A549 (cell line): ENCODE measurements at regions of chr2 and their contacts with region 1.

Region 1: GRCh38 chr2:9799665-9800632 is 43.3 kb upstream of the TAF1B start:
- DNase-seq: peak; percentile 85 to 93
- ATAC-seq: peak; percentile 75 to 92
- H3K4me3 ChIP-seq: no peak overlapping the region
- H3K27ac ChIP-seq: peak overlapping the region; percentile 34 to 87; a peak in 5 of 6 replicates
- H3K4me1 ChIP-seq: peaks cover 30% of the 10 kb centered on the region
- CTCF ChIP-seq: peak; percentile 98
- EP300 ChIP-seq: no peak
- POLR2A ChIP-seq: no peak
- RAD21 ChIP-seq: peak; percentile 92 to 97

Region 2: GRCh38 chr2:9287400-9288043 is 512.4 kb before region 1 on chr2:
- CTCF ChIA-PET with region 1: no interaction called
- POLR2A ChIA-PET with region 1: no interaction called
- DNase-seq: peak; percentile 94 to 99
- ATAC-seq: peak; percentile 94 to 95
- H3K4me3 ChIP-seq: no peak overlapping the region; the same call in 1 of the 3 replicates
- H3K27ac ChIP-seq: peak overlapping the region; percentile 86 to 87
- H3K4me1 ChIP-seq: peaks cover 58% of the 10 kb centered on the region
- CTCF ChIP-seq: peak; percentile 21; the same call in 1 of the 3 replicates
- EP300 ChIP-seq: peak; percentile 52 to 61; a peak in 2 of 5 replicates
- POLR2A ChIP-seq: no peak
- RAD21 ChIP-seq: peak in 1 of 2 experiments; percentile 41; a peak in 4 of 5 replicates

Region 3: GRCh38 chr2:9753276-9753600 is 46.7 kb before region 1 on chr2:
- CTCF ChIA-PET with region 1: interaction called, 11 read pairs
- POLR2A ChIA-PET with region 1: no interaction called
- DNase-seq: peak; percentile 88 to 92
- ATAC-seq: peak; percentile 81 to 91
- H3K4me3 ChIP-seq: peak overlapping the region; percentile 35
- H3K27ac ChIP-seq: peak overlapping the region; percentile 87 to 93
- H3K4me1 ChIP-seq: peaks cover 48% of the 10 kb centered on the region
- CTCF ChIP-seq: no peak
- EP300 ChIP-seq: no peak
- POLR2A ChIP-seq: peak; percentile 30; the same call in 1 of the 2 replicates
- RAD21 ChIP-seq: no peak; a peak in 1 of 5 replicates

Region 4: GRCh38 chr2:9789371-9789968 is 10.5 kb before region 1 on chr2:
- CTCF ChIA-PET with region 1: interaction called, 73 read pairs
- POLR2A ChIA-PET with region 1: no interaction called
- DNase-seq: no peak
- ATAC-seq: no peak
- H3K4me3 ChIP-seq: no peak overlapping the region
- H3K27ac ChIP-seq: no peak overlapping the region
- H3K4me1 ChIP-seq: no peaks in the 10 kb centered on the region
- CTCF ChIP-seq: no peak
- EP300 ChIP-seq: no peak
- POLR2A ChIP-seq: no peak
- RAD21 ChIP-seq: no peak

Region 5: DNA sequence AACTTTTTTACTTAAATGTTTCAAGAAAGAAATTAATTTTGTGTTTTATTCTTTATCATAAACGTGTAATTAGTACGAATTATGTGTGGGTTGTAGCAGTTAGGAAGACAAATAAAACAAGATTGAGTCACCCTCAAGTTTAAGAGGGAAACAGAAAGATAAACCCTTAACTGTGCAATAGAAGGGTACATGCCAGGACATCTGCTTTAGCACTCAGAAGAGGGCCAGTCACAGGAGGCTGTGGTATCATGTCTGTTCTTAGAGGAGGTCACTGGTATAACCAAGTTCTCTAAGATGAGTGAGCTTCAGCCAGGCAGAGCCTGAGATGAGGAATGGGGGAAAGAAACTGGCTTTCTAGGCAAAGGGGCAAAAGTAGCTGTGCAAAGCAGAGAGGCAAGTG is 109.2 kb after region 1 on chr2:
- CTCF ChIA-PET with region 1: interaction called, 47 read pairs
- POLR2A ChIA-PET with region 1: no interaction called
- DNase-seq: no peak
- ATAC-seq: no peak
- H3K4me3 ChIP-seq: no peak overlapping the region
- H3K27ac ChIP-seq: no peak overlapping the region
- H3K4me1 ChIP-seq: peaks cover 1% of the 10 kb centered on the region
- CTCF ChIP-seq: no peak
- EP300 ChIP-seq: no peak
- POLR2A ChIP-seq: no peak
- RAD21 ChIP-seq: no peak

Region 6: GRCh38 chr2:9984217-9984739 is 184.3 kb after region 1 on chr2:
- CTCF ChIA-PET with region 1: interaction called, 14 read pairs
- POLR2A ChIA-PET with region 1: no interaction called
- DNase-seq: peak; percentile 46 to 90
- ATAC-seq: peak; percentile 63 to 89
- H3K4me3 ChIP-seq: no peak overlapping the region
- H3K27ac ChIP-seq: no peak overlapping the region
- H3K4me1 ChIP-seq: 0 out of 3 replicates have a peak, but pooled peaks cover 3% of the 10 kb centered on the region
- CTCF ChIP-seq: peak; percentile 77
- EP300 ChIP-seq: no peak
- POLR2A ChIP-seq: no peak
- RAD21 ChIP-seq: peak; percentile 61 to 66

Region 7: GRCh38 chr2:10043906-10044601 is 244.1 kb after region 1 on chr2:
- CTCF ChIA-PET with region 1: interaction called, 149 read pairs
- POLR2A ChIA-PET with region 1: interaction called, 3 read pairs
- DNase-seq: peak; percentile 79 to 93
- ATAC-seq: peak; percentile 48 to 61
- H3K4me3 ChIP-seq: peak overlapping the region; percentile 89
- H3K27ac ChIP-seq: peak overlapping the region; percentile 87 to 90
- H3K4me1 ChIP-seq: no peaks in the 10 kb centered on the region; the same call in 2 of the 3 replicates
- CTCF ChIP-seq: no peak
- EP300 ChIP-seq: no peak
- POLR2A ChIP-seq: no peak
- RAD21 ChIP-seq: no peak

Region 8: DNA sequence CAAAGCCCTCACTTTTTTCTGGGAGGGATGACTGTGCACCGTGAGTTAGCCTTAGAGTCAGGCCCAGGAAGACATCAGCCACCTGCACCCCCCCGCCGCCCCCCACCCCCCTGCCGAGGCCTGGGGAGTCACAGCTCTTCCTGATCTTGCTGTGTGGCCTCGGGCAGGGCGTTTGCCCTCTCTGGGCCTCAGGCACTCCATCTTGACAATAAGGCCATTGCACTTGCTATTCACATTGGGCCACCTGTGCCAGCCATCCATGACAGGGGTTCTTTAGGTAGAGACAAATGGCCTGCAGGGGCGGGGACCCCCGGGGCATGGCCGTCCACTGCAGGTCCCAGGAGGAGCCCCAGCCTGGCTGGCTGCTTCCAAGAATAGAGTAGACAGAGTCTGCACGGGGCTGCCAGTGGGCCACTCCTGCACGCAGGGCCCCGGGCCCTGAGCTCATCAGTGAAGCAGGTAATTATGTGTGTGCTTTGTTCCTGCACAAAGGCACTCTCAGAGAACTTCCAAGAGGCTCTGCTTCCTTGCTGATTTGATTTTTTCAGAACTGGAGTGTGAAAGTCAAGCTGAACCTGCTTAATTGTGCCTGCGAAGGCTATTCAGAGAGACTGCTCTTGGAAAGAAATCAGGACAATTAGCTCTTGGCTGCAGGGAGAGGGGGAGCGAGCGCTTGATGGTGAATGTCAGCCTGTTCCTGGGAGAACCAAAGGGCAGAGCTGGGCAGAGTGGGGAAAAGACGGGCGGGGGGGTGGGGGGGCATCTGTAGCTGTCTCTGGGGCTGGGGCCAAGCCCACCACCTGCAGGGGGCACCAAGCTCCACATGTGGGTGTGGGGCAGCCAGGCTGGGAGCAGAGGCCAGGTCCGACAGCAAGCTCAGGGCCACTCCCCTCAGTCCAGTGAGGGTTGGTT is 362.9 kb after region 1 on chr2:
- CTCF ChIA-PET with region 1: no interaction called
- POLR2A ChIA-PET with region 1: no interaction called
- DNase-seq: peak in 1 of 2 experiments; percentile 27
- ATAC-seq: peak; percentile 20 to 38; a peak in 2 of 6 replicates
- H3K4me3 ChIP-seq: no peak overlapping the region
- H3K27ac ChIP-seq: no peak overlapping the region
- H3K4me1 ChIP-seq: no peaks in the 10 kb centered on the region
- CTCF ChIP-seq: 0 out of 3 replicates have a peak, but pooled peaks have one; percentile 7
- EP300 ChIP-seq: no peak
- POLR2A ChIP-seq: no peak
- RAD21 ChIP-seq: peak; percentile 21 to 31; a peak in 2 of 5 replicates